BJ (cell line): ENCODE measurements at regions of chr15 and their contacts with region 1.

Region 1: GRCh38 chr15:60444289-60444912 is 34.5 kb downstream of the ICE2 start:
- DNase-seq: no peak
- H3K4me3 ChIP-seq: no peak overlapping the region
- H3K27me3 ChIP-seq: no peaks in the 10 kb centered on the region
- CTCF ChIP-seq: peak; percentile 68

Region 2: GRCh38 chr15:60299452-60300047 is 144.9 kb before region 1 on chr15:
- CTCF ChIA-PET with region 1: no interaction called
- POLR2A ChIA-PET with region 1: no interaction called
- DNase-seq: no peak
- H3K4me3 ChIP-seq: no peak overlapping the region
- H3K27me3 ChIP-seq: 0 out of 2 replicates have a peak, but pooled peaks cover 2% of the 10 kb centered on the region
- CTCF ChIP-seq: peak; percentile 43

Region 3: GRCh38 chr15:60362321-60363086 is 81.9 kb before region 1 on chr15:
- CTCF ChIA-PET with region 1: interaction called, 33 read pairs
- POLR2A ChIA-PET with region 1: interaction called, 3 read pairs
- DNase-seq: peak; percentile 63
- H3K4me3 ChIP-seq: no peak overlapping the region
- H3K27me3 ChIP-seq: no peaks in the 10 kb centered on the region
- CTCF ChIP-seq: no peak